Naive thymus-derived CD4-positive, alpha-beta T cell (primary cell): ENCODE measurements at regions of chr19 and their contacts with region 1.

Region 1: DNA sequence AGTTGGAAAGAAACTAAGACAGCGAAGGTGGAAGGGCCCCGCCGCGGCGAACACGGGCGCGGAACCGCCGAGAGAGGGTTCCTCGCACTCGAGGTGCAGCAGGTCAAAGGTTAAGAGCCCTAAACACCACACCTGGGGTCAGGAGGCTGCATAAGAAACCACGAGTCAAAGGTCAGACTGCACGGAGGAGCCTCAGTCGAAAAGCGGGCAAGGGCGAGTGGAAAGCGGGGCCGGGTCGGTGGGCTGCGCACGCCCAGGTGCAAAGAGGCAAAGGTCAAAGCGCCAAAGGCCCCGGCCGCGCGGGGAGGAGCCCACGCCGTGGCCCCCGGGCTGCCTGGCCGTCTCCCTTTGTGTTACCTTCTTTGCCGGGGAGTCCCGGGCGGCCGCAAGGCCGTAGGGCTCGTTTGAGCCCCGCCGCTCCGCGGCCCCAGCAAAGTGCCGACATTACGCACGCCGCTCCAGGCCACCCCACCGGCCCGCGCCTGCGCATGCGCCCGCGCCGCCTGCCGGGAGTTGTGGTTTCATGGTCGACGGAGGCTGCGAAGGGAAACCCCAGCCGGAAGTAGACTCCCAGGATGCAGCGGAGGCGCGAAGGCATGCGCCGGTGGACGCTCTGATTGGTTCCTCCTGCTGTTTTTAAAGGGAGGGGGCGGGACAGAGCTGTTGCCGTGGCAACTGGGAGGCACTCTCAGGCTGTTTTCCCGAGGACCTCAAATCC is at the start of gene POLRMT:
- DNase-seq: peak; percentile 87 to 99 (median 96)
- ATAC-seq: peak; percentile 99
- H3K4me3 ChIP-seq: peak within 1 kb of the TSS; percentile 91
- H3K4me3 Mint-ChIP-seq: peak within 1 kb of the TSS; percentile 92 to 99 (median 97)
- H3K27ac ChIP-seq: peak within 1 kb of the TSS; percentile 78
- H3K27ac Mint-ChIP-seq: peak within 1 kb of the TSS; percentile 89 to 97 (median 93)
- H3K4me1 ChIP-seq: peaks cover 6 to 13% of the 10 kb centered on the region in 2 donors
- H3K4me1 Mint-ChIP-seq: peaks cover 13 to 41% (median 24%) of the 10 kb centered on the region in 7 donors
- H3K27me3 ChIP-seq: no peaks in the 10 kb centered on the region
- H3K27me3 Mint-ChIP-seq: no peaks in the 10 kb centered on the region
- total RNA-seq, gene POLRMT: 61.2 to 105 (median 71.3) TPM

Region 2: DNA sequence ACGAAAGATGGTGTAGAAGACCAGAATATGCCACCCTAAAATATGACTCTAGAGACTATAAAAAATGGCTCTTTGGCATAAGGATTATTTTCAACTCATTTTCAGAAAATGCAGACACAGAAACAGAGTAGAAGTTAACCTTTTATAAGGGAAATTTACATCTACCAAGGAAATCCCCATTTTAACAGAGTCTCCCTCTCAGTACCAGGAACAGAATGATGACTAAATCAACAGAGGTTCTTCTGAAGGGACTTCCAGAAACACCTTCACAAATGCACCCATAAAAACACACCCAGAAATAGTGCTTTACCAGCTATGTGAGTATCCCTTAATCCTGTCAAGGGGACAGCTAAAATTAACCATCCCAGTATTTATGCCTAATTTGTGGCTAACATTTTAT is 371.1 kb before region 1 on chr19:
- CTCF ChIA-PET with region 1: no interaction called
- POLR2A ChIA-PET with region 1: no interaction called
- intact Hi-C with region 1: no loop called
- DNase-seq: no peak
- ATAC-seq: no peak
- H3K4me3 ChIP-seq: no peak overlapping the region
- H3K4me3 Mint-ChIP-seq: peak overlapping the region in 1 of 10 donors; percentile 27
- H3K27ac ChIP-seq: no peak overlapping the region
- H3K27ac Mint-ChIP-seq: peak overlapping the region in 1 of 9 donors; percentile 52
- H3K4me1 ChIP-seq: no peaks in the 10 kb centered on the region
- H3K4me1 Mint-ChIP-seq: peaks cover 0 to 15% (median 7%) of the 10 kb centered on the region in 7 donors
- H3K27me3 ChIP-seq: no peaks in the 10 kb centered on the region
- H3K27me3 Mint-ChIP-seq: peaks cover 29 to 60% (median 37%) of the 10 kb centered on the region in 5 donors

Region 3: DNA sequence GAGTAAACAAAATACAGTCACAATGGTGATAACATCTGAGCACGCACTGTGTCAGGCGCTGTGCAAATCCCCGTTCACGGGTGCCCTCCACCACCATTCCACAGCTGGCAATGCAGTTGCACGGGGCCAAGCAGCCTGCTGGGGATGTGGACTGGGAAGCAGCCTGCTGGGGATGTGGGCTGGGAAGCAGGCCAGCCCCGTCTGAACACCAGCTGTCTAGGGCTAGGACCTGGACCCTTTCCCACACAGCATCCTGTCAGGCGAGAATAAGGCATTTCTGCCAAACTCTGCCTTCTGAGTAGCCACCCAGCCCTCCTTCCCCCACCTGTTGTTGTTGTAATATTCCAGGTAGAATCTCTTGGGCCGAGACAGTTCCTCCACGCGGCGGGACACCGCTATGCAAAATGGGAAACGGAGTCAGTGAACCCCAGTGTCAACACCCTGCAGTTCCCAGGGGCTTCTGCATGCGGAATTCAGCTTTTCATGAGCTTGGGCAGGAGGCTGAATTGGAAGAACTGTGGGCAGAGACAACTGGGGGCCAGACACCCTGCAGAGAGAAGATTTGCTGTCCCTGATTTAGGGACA is 260.8 kb before region 1 on chr19:
- CTCF ChIA-PET with region 1: no interaction called
- POLR2A ChIA-PET with region 1: no interaction called
- intact Hi-C with region 1: no loop called
- DNase-seq: no peak
- ATAC-seq: no peak
- H3K4me3 ChIP-seq: no peak overlapping the region
- H3K4me3 Mint-ChIP-seq: no peak overlapping the region
- H3K27ac ChIP-seq: no peak overlapping the region
- H3K27ac Mint-ChIP-seq: no peak overlapping the region
- H3K4me1 ChIP-seq: no peaks in the 10 kb centered on the region
- H3K4me1 Mint-ChIP-seq: no peaks in the 10 kb centered on the region
- H3K27me3 ChIP-seq: no peaks in the 10 kb centered on the region
- H3K27me3 Mint-ChIP-seq: peaks cover 2 to 54% (median 28%) of the 10 kb centered on the region in 5 donors

Region 4: GRCh38 chr19:610801-611505 is 22.3 kb before region 1 on chr19:
- CTCF ChIA-PET with region 1: no interaction called
- POLR2A ChIA-PET with region 1: interaction called, 4 read pairs
- intact Hi-C with region 1: loop called (anchors 1 kb)
- DNase-seq: peak in 8 of 9 donors; percentile 55 to 75 (median 62)
- ATAC-seq: peak; percentile 72
- H3K4me3 ChIP-seq: peak overlapping the region; percentile 49
- H3K4me3 Mint-ChIP-seq: peak overlapping the region; percentile 83 to 97 (median 94)
- H3K27ac ChIP-seq: peak overlapping the region; percentile 75
- H3K27ac Mint-ChIP-seq: peak overlapping the region; percentile 81 to 98 (median 90)
- H3K4me1 ChIP-seq: peaks cover 12% of the 10 kb centered on the region in 2 donors
- H3K4me1 Mint-ChIP-seq: peaks cover 0 to 23% (median 17%) of the 10 kb centered on the region in 7 donors
- H3K27me3 ChIP-seq: no peaks in the 10 kb centered on the region
- H3K27me3 Mint-ChIP-seq: no peaks in the 10 kb centered on the region